ENCODE measurements at regions of chr3 and their contacts with region 1.

Region 1: DNA sequence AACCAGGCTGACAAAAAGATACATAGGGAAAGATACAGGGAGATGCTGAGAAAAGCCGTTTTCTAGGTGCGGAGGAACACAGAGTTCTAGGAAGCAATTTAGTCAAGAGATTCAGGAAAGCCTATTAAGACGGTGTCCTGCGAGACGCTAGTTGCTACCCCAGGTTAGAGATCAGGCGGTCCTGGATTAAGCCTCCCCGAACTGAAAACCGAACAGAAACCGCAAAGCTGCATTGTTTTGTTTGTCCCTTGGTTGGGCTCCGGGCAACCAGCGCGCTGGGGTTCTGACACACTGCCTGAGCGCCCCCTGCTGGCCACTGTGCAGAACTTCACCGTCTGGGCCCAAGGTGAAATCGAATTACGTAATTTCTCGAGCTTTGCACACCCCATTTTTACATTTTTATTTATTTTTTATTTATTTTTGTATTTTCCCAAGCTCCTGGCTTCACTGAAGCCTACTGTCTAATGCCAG is 37.3 kb upstream of the NDUFB4 start:
- DNase-seq: peak; percentile 86 to 92 (median 90)
- ATAC-seq: peak; percentile 70 to 79 (median 74)
- H3K4me3 ChIP-seq: peak overlapping the region; percentile 13 to 55 (median 45)
- H3K27ac ChIP-seq: peak overlapping the region in 2 of 3 donors; percentile 59 to 77
- H3K4me1 ChIP-seq: peaks cover 0 to 42% (median 19%) of the 10 kb centered on the region in 4 donors
- H3K27me3 ChIP-seq: no peaks in the 10 kb centered on the region
- CTCF ChIP-seq: peak; percentile 96 to 99 (median 98)
- POLR2A ChIP-seq: no peak

Region 2: GRCh38 chr3:120245386-120245785 is 313.4 kb before region 1 on chr3:
- intact Hi-C with region 1: loop called in 1 of 2 experiments (anchors 5 kb)
- DNase-seq: no peak
- ATAC-seq: no peak
- H3K4me3 ChIP-seq: no peak overlapping the region
- H3K27ac ChIP-seq: no peak overlapping the region
- H3K4me1 ChIP-seq: no peaks in the 10 kb centered on the region
- H3K27me3 ChIP-seq: no peaks in the 10 kb centered on the region
- CTCF ChIP-seq: no peak
- POLR2A ChIP-seq: no peak

Region 3: DNA sequence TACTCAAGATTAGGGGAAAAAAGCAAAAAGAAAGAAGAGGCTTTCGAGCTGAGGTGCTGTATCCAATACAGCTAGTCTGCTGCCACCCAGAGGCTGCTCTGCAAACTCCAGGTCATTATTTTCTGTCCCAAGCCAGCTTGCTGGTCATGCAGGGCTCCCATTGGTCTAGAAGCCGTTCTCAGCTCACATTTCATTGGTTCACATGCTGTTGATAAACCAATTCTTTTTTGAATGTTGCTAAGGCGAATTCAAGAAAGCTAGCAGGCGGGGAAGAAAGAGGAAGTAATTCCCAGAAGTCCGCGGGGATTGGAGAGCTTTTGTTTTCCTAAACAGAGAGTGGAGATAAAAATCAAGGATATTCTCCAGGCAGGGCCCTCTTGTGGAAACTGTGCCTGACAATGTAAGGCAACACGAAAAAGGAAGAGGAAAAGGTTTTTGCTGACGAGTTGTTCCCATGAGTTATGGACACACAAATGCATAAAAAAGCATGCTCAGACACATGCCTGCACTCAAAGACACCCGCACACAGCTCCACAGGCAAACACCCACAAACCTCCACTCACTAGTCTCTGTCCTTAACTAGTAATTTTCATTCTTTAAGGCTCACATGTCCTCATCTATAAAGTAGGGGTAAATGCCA is 141.4 kb before region 1 on chr3:
- intact Hi-C with region 1: loop called in 1 of 2 experiments (anchors 5 kb)
- DNase-seq: peak; percentile 85 to 94 (median 89)
- ATAC-seq: peak; percentile 97 to 98 (median 98)
- H3K4me3 ChIP-seq: peak overlapping the region; percentile 7 to 31 (median 31)
- H3K27ac ChIP-seq: peak overlapping the region; percentile 15 to 33 (median 26)
- H3K4me1 ChIP-seq: peaks cover 0 to 27% (median 2%) of the 10 kb centered on the region in 4 donors
- H3K27me3 ChIP-seq: no peaks in the 10 kb centered on the region
- CTCF ChIP-seq: peak; percentile 91 to 96 (median 92)
- POLR2A ChIP-seq: no peak

Region 4: DNA sequence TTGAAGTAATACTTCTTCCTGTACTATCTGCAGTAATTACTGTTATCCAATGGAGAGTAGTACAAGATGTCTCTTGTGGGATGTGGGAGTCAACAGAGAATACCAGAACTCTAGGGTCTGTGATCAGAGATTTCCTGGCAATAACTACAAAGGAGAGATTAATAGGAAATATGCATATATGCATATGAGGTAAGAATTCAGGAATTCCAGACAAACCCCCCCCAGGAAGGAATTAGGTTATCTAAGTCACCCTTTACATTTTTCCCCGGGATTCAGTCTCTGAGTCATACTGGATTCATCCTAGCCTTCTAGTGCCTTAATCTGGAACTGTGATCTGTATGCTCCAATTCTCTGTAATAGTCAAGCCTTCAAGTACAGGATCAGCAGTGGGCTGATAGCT is 233.1 kb after region 1 on chr3:
- intact Hi-C with region 1: loop called in 1 of 2 experiments (anchors 5 kb)
- DNase-seq: no peak
- ATAC-seq: no peak
- H3K4me3 ChIP-seq: no peak overlapping the region
- H3K27ac ChIP-seq: no peak overlapping the region
- H3K4me1 ChIP-seq: no peaks in the 10 kb centered on the region
- H3K27me3 ChIP-seq: no peaks in the 10 kb centered on the region
- CTCF ChIP-seq: no peak
- POLR2A ChIP-seq: no peak